Left cardiac atrium (tissue), 4 donors: ENCODE measurements at regions of chr1 and their contacts with region 1.

Region 1: DNA sequence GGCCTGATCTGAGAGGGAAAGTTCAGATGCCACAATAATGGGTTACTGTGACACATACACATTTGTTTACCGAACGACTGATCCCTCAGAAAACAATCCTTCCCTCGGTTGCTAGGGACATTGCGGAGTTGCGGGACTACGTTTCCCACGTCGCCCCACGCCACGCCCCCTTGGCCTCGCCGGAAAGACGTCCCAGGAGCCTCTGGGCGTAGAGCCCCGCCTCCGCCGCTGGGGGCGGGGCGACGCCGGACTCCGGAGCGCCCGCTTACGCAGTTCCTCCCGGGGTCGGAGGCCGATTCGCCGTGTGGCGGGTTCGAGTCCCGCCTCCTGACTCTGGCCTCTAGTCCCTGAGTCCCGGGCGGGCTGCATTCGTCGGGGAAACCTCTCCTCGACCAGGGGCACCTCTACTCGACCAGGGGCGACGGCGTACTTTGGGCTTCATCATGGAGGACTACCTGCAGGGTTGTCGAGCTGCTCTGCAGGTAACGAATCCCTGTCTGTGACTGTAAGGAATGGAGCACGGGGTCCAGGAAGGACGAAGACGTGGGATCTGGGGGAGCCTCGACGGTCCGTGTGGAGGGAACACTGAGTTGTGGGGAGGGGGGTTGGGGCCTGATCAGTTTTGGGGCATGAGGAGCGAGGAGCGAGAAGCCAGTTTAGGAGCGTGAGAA is at the start of gene PRUNE1:
- DNase-seq: peak; percentile 98
- ATAC-seq: peak; percentile 91 to 93
- total RNA-seq, gene PRUNE1: 33.1 to 36.6 TPM

Region 2: GRCh38 chr1:151059078-151059907 is 51.0 kb after region 1 on chr1 and contains the start of gene CDC42SE1:
- intact Hi-C with region 1: loop called in 1 of 2 experiments (anchors 10 kb)
- DNase-seq: peak; percentile 90
- ATAC-seq: peak; percentile 92 to 96
- total RNA-seq, gene CDC42SE1: 36.5 to 55.3 TPM

Region 3: GRCh38 chr1:151485685-151486255 is 477.4 kb after region 1 on chr1:
- intact Hi-C with region 1: no loop called
- DNase-seq: no peak
- ATAC-seq: peak in 1 of 2 donors; percentile 12